AG04449 (cell line): ENCODE measurements at regions of chr6 and their contacts with region 1.

Region 1: GRCh38 chr6:152552616-152553209 is 84.4 kb downstream of the SYNE1 start:
- DNase-seq: no peak
- H3K4me3 ChIP-seq: no peak overlapping the region
- CTCF ChIP-seq: peak; percentile 85

Region 2: DNA sequence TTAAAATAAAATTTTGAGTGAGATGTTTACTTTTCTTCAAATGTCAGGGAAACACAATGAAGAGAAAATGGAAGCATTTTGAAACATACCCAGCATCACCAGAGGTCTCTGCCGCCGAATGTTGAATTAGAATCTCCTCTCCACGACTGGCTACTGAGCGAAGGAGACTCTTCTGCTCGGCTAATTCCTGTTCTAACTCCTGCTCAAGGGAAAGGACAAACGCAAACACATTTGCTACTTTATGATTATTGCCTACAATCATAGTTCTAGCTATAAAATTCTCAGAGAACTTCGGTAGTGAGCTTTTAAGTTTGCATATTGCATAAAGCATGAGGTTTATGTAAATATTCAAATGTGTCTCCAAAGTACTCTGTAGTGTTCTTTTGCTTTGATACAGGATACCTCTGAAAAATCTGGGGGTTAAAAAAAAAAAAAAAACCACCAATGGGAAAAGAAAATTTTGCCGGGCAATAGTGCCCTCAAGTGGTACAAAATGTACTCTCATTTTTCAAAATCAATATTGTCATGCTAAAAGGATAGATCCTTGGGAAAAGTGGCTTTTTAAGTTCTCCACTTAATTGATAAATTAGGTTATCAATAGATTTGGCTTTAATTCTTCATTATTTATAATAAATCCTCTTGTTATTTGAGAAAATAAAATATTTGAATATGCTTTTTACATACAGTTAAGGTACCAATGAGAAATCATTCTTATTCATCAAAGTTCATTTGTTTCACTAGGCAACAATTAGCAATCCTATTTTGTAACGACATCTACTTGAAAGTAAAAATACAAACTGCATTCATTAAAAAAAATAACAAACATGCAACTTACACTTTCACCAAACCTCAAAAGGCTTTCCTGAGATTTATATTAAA is 284.5 kb before region 1 on chr6:
- CTCF ChIA-PET with region 1: no interaction called
- POLR2A ChIA-PET with region 1: no interaction called
- DNase-seq: no peak
- H3K4me3 ChIP-seq: no peak overlapping the region
- CTCF ChIP-seq: peak; percentile 24

Region 3: DNA sequence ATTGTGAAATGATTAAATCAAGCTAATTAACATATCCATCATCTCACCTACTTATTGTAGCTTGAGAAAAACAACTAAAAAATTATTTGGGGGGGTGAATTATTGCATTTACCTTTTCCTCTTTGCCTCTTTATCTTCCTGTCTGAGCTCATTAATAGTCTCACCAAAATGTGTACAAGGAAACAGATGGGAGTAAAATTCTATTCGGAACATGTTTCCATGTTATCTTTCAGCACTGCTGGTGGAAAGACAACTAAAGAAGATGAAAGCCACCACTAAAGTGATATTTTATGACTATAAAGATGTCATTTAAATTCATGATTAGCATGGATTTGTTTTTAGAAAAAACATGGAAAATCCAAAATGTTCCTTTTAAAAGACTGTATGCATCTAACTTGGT is 18.2 kb before region 1 on chr6:
- CTCF ChIA-PET with region 1: interaction called, 19 read pairs
- POLR2A ChIA-PET with region 1: no interaction called
- DNase-seq: no peak
- H3K4me3 ChIP-seq: no peak overlapping the region
- CTCF ChIP-seq: no peak

Region 4: DNA sequence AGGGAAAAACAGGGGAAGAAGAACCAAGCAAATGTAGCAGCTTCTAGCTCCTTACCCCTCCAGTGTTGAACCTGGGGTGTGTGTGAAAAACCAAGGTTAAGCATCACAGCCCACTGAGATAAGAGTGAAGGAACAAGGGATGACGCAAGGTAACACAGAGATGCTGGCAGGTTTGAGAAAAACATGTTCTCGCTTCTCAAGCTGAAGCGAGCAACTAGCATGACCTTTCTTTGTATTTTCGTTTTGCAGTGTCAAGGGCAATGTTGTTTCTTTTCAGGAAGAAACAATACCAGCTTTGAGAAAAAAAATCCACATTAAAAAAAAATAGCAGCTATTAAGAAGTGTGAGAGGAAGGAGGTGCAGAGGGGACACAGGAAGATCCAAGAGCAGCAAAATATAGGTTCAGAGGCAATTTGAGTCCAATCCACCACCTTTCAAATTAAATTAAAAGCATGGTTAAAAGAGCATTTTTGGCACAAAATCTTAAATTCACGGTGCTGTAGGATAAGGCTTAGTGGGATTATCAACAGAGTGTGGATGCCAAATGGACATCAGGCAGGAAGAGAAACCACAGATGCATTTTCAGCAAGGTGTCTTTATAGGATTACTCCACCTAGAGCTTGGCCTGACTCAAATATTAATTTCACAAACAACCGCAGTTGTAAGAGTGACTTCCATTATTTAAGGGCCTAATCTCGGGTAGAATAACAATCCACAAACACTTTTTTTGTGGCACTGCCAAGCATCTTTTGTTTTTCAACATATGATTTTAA is 13.6 kb after region 1 on chr6:
- CTCF ChIA-PET with region 1: interaction called, 24 read pairs
- POLR2A ChIA-PET with region 1: no interaction called
- DNase-seq: no peak
- H3K4me3 ChIP-seq: no peak overlapping the region
- CTCF ChIP-seq: no peak

Region 5: DNA sequence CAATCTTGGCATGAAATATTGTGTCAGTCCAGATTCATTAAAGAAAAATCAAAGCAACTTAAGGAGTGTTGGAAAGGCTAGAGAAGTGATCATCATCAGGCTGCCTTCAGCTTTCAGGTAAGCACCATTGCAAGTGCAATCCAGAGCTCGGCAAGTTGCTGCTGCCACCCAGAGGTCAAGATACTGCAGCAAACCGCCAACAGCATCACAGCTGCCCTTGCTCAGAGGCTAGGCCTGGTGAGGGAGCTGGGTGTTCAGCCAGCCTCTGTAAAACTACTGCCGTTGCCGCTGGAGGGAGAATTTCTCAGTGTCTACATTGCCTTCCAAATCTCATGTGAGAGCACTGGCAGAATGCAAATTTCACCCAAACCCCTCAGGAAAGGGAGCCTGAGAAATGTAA is 90.3 kb after region 1 on chr6:
- CTCF ChIA-PET with region 1: interaction called, 26 read pairs
- POLR2A ChIA-PET with region 1: no interaction called
- DNase-seq: no peak
- H3K4me3 ChIP-seq: no peak overlapping the region
- CTCF ChIP-seq: peak; percentile 73

Region 6: GRCh38 chr6:152701081-152701862 is 148.6 kb after region 1 on chr6:
- CTCF ChIA-PET with region 1: interaction called, 19 read pairs
- POLR2A ChIA-PET with region 1: no interaction called
- DNase-seq: no peak
- H3K4me3 ChIP-seq: no peak overlapping the region
- CTCF ChIP-seq: no peak